ENCODE measurements at regions of chr3 and their contacts with region 1.

Region 1: DNA sequence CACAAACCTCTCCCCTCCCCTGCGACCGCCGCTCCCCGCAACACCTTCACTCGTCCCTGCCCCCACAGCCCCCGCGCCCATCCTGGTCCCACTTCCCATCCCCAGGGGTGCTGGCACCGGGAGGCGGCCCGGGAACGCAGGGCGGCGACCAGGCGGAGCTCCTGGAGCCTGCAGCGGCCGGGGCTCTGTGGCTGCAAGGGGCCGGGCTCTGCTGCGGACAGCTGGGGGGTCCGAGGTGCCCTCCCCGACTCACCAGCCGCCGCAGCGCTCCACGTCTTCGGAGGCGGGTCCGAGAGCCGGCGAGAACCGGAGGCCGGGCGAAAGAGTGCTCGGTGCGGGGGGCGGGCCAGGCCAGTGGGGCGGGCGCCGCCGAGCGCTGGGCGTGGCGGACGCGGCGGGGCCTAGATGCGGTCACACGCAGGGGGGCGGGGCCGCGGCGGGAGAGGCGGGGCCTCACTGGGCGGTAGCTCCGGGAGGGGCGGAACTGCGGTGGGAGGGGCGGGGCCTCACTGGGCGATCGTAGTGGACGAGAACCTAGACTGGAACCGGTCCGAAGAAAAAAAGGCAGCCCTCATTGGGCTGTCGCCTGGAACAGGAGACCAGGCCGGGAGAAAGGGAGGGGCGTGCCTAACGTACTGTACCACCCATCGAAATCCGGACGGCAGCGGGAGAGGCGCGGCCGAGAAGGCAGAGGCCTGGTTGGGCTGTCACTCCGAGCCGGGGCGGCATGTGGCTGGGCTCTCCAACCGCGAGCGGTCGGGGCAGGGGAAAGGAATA is at the start of gene ANO10:
- DNase-seq: peak; percentile 96
- ATAC-seq: peak; percentile 92
- H3K4me3 ChIP-seq: peak within 1 kb of the TSS; percentile 61 to 79 (median 72)
- H3K4me3 Mint-ChIP-seq: peak within 1 kb of the TSS; percentile 88
- H3K27ac ChIP-seq: peak within 1 kb of the TSS; percentile 2 to 28
- H3K27ac Mint-ChIP-seq: peak within 1 kb of the TSS; percentile 77
- H3K4me1 ChIP-seq: peaks cover 9 to 11% of the 10 kb centered on the region in 2 donors
- H3K4me1 Mint-ChIP-seq: peaks cover 12% of the 10 kb centered on the region
- H3K27me3 ChIP-seq: no peaks in the 10 kb centered on the region
- H3K27me3 Mint-ChIP-seq: peaks cover 4% of the 10 kb centered on the region
- CTCF ChIP-seq: no peak
- total RNA-seq, gene ANO10: 10.6 and 13.9 TPM in 2 replicates

Region 2: GRCh38 chr3:43105596-43106292 is 516.1 kb before region 1 on chr3 and contains the start of gene POMGNT2:
- CTCF ChIA-PET with region 1: no interaction called
- POLR2A ChIA-PET with region 1: no interaction called
- intact Hi-C with region 1: loop called (anchors 10 kb)
- DNase-seq: peak; percentile 91
- ATAC-seq: peak; percentile 96
- H3K4me3 ChIP-seq: peak within 1 kb of the TSS; percentile 21 to 79 (median 72)
- H3K4me3 Mint-ChIP-seq: peak within 1 kb of the TSS; percentile 87
- H3K27ac ChIP-seq: peak within 1 kb of the TSS in 1 of 2 donors; percentile 65
- H3K27ac Mint-ChIP-seq: peak within 1 kb of the TSS; percentile 32
- H3K4me1 ChIP-seq: peaks cover 9 to 14% of the 10 kb centered on the region in 2 donors
- H3K4me1 Mint-ChIP-seq: peaks cover 14% of the 10 kb centered on the region
- H3K27me3 ChIP-seq: no peaks in the 10 kb centered on the region
- H3K27me3 Mint-ChIP-seq: no peaks in the 10 kb centered on the region
- CTCF ChIP-seq: no peak
- total RNA-seq, gene POMGNT2: 2.3 and 2.8 TPM in 2 replicates

Region 3: GRCh38 chr3:43353923-43354670 is 267.7 kb before region 1 on chr3:
- CTCF ChIA-PET with region 1: no interaction called
- POLR2A ChIA-PET with region 1: no interaction called
- intact Hi-C with region 1: no loop called
- DNase-seq: no peak
- ATAC-seq: no peak
- H3K4me3 ChIP-seq: no peak overlapping the region
- H3K4me3 Mint-ChIP-seq: no peak overlapping the region
- H3K27ac ChIP-seq: no peak overlapping the region
- H3K27ac Mint-ChIP-seq: no peak overlapping the region
- H3K4me1 ChIP-seq: no peaks in the 10 kb centered on the region
- H3K4me1 Mint-ChIP-seq: no peaks in the 10 kb centered on the region
- H3K27me3 ChIP-seq: no peaks in the 10 kb centered on the region
- H3K27me3 Mint-ChIP-seq: no peaks in the 10 kb centered on the region
- CTCF ChIP-seq: no peak

Region 4: GRCh38 chr3:43690400-43691119 is 68.7 kb after region 1 on chr3 and contains the start of gene ABHD5:
- CTCF ChIA-PET with region 1: interaction called, 3 read pairs
- POLR2A ChIA-PET with region 1: interaction called, 9 read pairs
- intact Hi-C with region 1: loop called (anchors 1 kb)
- DNase-seq: peak; percentile 98
- ATAC-seq: peak; percentile 82
- H3K4me3 ChIP-seq: peak within 1 kb of the TSS; percentile 58 to 86 (median 83)
- H3K4me3 Mint-ChIP-seq: peak within 1 kb of the TSS; percentile 98
- H3K27ac ChIP-seq: peak within 1 kb of the TSS; percentile 58 to 87
- H3K27ac Mint-ChIP-seq: peak within 1 kb of the TSS; percentile 98
- H3K4me1 ChIP-seq: peaks cover 5 to 21% of the 10 kb centered on the region in 2 donors
- H3K4me1 Mint-ChIP-seq: peaks cover 27% of the 10 kb centered on the region
- H3K27me3 ChIP-seq: no peaks in the 10 kb centered on the region
- H3K27me3 Mint-ChIP-seq: no peaks in the 10 kb centered on the region
- CTCF ChIP-seq: peak; percentile 39
- total RNA-seq, gene ABHD5: 11.0 and 12.1 TPM in 2 replicates

Region 5: GRCh38 chr3:43759297-43759782 is 137.5 kb after region 1 on chr3:
- CTCF ChIA-PET with region 1: no interaction called
- POLR2A ChIA-PET with region 1: no interaction called
- intact Hi-C with region 1: no loop called
- DNase-seq: no peak
- ATAC-seq: no peak
- H3K4me3 ChIP-seq: no peak overlapping the region
- H3K4me3 Mint-ChIP-seq: no peak overlapping the region
- H3K27ac ChIP-seq: no peak overlapping the region
- H3K27ac Mint-ChIP-seq: no peak overlapping the region
- H3K4me1 ChIP-seq: no peaks in the 10 kb centered on the region
- H3K4me1 Mint-ChIP-seq: no peaks in the 10 kb centered on the region
- H3K27me3 ChIP-seq: no peaks in the 10 kb centered on the region
- H3K27me3 Mint-ChIP-seq: peaks cover 4% of the 10 kb centered on the region
- CTCF ChIP-seq: no peak

Region 6: GRCh38 chr3:43998836-43999727 is 377.2 kb after region 1 on chr3:
- CTCF ChIA-PET with region 1: no interaction called
- POLR2A ChIA-PET with region 1: no interaction called
- intact Hi-C with region 1: loop called (anchors 5 kb)
- DNase-seq: peak; percentile 63
- ATAC-seq: peak; percentile 57
- H3K4me3 ChIP-seq: peak overlapping the region in 4 of 5 experiments; percentile 37 to 74 (median 56)
- H3K4me3 Mint-ChIP-seq: peak overlapping the region; percentile 95
- H3K27ac ChIP-seq: no peak overlapping the region
- H3K27ac Mint-ChIP-seq: peak overlapping the region; percentile 67
- H3K4me1 ChIP-seq: peaks cover 50 to 54% of the 10 kb centered on the region in 2 donors
- H3K4me1 Mint-ChIP-seq: peaks cover 53% of the 10 kb centered on the region
- H3K27me3 ChIP-seq: peaks cover 0 to 62% (median 34%) of the 10 kb centered on the region in 4 experiments
- H3K27me3 Mint-ChIP-seq: peaks cover 57% of the 10 kb centered on the region
- CTCF ChIP-seq: no peak

Region 7: DNA sequence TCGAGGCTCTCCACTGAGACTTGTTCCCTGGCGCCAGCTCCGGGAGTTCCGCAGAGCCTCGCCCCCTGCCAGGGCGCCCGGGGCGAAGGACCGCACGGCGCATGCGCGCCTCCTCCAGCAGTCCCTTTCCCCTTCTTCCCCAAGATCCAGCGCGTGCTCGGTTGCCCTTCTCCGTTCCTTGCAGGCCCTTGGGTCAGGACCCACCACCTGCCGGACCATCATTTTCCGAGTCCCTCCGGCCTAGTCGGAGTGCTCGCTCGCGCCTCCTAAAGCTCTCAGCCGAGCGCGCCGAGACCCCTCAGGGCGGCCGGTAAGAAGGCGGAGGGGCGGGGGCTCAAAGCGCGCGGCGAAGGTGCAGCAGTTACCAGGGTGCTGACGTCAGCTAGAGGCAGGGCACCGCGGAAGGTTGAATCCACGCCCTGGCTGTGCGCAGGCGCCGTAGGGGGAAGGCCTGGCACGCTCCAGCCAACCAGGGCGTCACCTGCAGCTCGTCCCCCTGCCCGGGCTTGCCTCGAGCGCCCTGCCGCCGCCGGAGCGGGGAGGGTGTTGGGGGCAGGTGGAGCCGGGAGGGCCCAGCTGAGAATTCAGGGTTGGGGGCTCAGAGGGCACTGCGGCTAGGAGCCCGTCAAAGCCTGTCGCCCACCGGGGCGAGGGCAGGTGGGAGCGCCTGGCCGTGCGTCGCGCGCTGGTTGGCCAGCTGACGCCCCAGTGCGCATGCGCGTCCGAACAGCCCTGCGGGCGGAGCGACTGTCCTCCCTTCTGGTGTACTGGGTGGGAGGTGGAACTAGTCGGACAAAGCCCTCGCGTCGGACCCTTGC is 716.4 kb after region 1 on chr3 and contains the start of gene TCAIM:
- CTCF ChIA-PET with region 1: no interaction called
- POLR2A ChIA-PET with region 1: no interaction called
- intact Hi-C with region 1: loop called (anchors 1 kb)
- DNase-seq: peak; percentile 100
- ATAC-seq: peak; percentile 90
- H3K4me3 ChIP-seq: peak within 1 kb of the TSS; percentile 85 to 97 (median 87)
- H3K4me3 Mint-ChIP-seq: peak within 1 kb of the TSS; percentile 99
- H3K27ac ChIP-seq: peak within 1 kb of the TSS; percentile 80 to 88
- H3K27ac Mint-ChIP-seq: peak within 1 kb of the TSS; percentile 99
- H3K4me1 ChIP-seq: peaks cover 16 to 19% of the 10 kb centered on the region in 2 donors
- H3K4me1 Mint-ChIP-seq: peaks cover 29% of the 10 kb centered on the region
- H3K27me3 ChIP-seq: no peaks in the 10 kb centered on the region
- H3K27me3 Mint-ChIP-seq: peaks cover 9% of the 10 kb centered on the region
- CTCF ChIP-seq: no peak
- total RNA-seq, gene TCAIM: 15.8 and 16.7 TPM in 2 replicates